Activated naive CD4-positive, alpha-beta T cell treated with anti-CD3 and anti-CD28 coated beads, Interleukin-2, amount 10 ng/mL, durations not matched to agents 7 days and 5 days (primary cell): ENCODE measurements at regions of chr6 and their contacts with region 1.

Region 1: GRCh38 chr6:137866914-137867684 is at the start of gene TNFAIP3:
- DNase-seq: peak; percentile 95
- H3K4me3 Mint-ChIP-seq: peak within 1 kb of the TSS; percentile 93
- H3K27ac Mint-ChIP-seq: peak within 1 kb of the TSS; percentile 96
- H3K4me1 Mint-ChIP-seq: peaks cover 55% of the 10 kb centered on the region
- H3K27me3 Mint-ChIP-seq: no peaks in the 10 kb centered on the region

Region 2: GRCh38 chr6:137323860-137324259 is 543.2 kb before region 1 on chr6:
- CTCF ChIA-PET with region 1: no interaction called
- DNase-seq: no peak
- H3K4me3 Mint-ChIP-seq: no peak overlapping the region
- H3K27ac Mint-ChIP-seq: no peak overlapping the region
- H3K4me1 Mint-ChIP-seq: no peaks in the 10 kb centered on the region
- H3K27me3 Mint-ChIP-seq: peaks cover 8% of the 10 kb centered on the region

Region 3: GRCh38 chr6:137707590-137708360 is 159.3 kb before region 1 on chr6:
- CTCF ChIA-PET with region 1: interaction called, 71 read pairs
- DNase-seq: peak; percentile 89
- H3K4me3 Mint-ChIP-seq: peak overlapping the region; percentile 40
- H3K27ac Mint-ChIP-seq: peak overlapping the region; percentile 91
- H3K4me1 Mint-ChIP-seq: peaks cover 58% of the 10 kb centered on the region
- H3K27me3 Mint-ChIP-seq: peaks cover 4% of the 10 kb centered on the region

Region 4: GRCh38 chr6:137799950-137800568 is 67.0 kb before region 1 on chr6:
- CTCF ChIA-PET with region 1: interaction called, 201 read pairs
- DNase-seq: peak; percentile 64
- H3K4me3 Mint-ChIP-seq: no peak overlapping the region
- H3K27ac Mint-ChIP-seq: no peak overlapping the region
- H3K4me1 Mint-ChIP-seq: peaks cover 55% of the 10 kb centered on the region
- H3K27me3 Mint-ChIP-seq: no peaks in the 10 kb centered on the region

Region 5: GRCh38 chr6:137823826-137824555 is 43.1 kb before region 1 on chr6:
- CTCF ChIA-PET with region 1: interaction called, 14 read pairs
- DNase-seq: peak; percentile 84
- H3K4me3 Mint-ChIP-seq: peak overlapping the region; percentile 58
- H3K27ac Mint-ChIP-seq: peak overlapping the region; percentile 99
- H3K4me1 Mint-ChIP-seq: peaks cover 78% of the 10 kb centered on the region
- H3K27me3 Mint-ChIP-seq: no peaks in the 10 kb centered on the region

Region 6: GRCh38 chr6:137944793-137945498 is 77.8 kb after region 1 on chr6:
- CTCF ChIA-PET with region 1: interaction called, 467 read pairs
- DNase-seq: peak; percentile 42
- H3K4me3 Mint-ChIP-seq: no peak overlapping the region
- H3K27ac Mint-ChIP-seq: no peak overlapping the region
- H3K4me1 Mint-ChIP-seq: peaks cover 23% of the 10 kb centered on the region
- H3K27me3 Mint-ChIP-seq: no peaks in the 10 kb centered on the region

Region 7: DNA sequence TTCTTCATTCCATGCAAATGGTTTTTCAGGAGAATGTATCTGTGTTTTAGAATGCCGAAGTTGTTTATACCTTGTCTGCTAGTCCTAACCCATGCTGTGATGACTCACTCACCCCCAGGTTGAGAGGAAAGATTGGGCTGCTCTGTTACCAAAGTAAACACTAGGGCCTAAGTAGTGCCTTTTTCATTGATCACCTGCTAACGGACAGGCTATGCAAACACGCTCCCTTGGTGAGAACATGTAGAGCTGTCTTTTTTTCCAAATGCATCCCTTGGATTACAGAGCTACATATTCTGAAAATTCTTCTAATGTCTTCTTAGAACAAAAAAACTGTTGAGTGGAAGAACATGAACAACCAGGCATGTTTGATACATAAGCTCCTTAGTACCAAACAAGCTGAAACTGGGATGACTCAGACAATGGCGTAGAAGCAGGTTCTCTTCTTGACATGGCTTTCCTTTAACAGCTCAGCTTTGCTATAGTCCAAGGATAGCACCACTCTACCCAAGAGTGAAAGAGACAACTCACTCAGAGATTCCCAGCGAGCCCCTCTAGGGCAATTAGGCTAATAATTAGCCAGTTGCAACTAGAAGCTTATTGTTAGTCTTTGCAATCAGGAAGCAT is 219.6 kb after region 1 on chr6:
- CTCF ChIA-PET with region 1: no interaction called
- DNase-seq: no peak
- H3K4me3 Mint-ChIP-seq: no peak overlapping the region
- H3K27ac Mint-ChIP-seq: no peak overlapping the region
- H3K4me1 Mint-ChIP-seq: no peaks in the 10 kb centered on the region
- H3K27me3 Mint-ChIP-seq: peaks cover 10% of the 10 kb centered on the region